Gastrocnemius medialis (tissue), 4 donors: ENCODE measurements at regions of chrX and their contacts with region 1.

Region 1: DNA sequence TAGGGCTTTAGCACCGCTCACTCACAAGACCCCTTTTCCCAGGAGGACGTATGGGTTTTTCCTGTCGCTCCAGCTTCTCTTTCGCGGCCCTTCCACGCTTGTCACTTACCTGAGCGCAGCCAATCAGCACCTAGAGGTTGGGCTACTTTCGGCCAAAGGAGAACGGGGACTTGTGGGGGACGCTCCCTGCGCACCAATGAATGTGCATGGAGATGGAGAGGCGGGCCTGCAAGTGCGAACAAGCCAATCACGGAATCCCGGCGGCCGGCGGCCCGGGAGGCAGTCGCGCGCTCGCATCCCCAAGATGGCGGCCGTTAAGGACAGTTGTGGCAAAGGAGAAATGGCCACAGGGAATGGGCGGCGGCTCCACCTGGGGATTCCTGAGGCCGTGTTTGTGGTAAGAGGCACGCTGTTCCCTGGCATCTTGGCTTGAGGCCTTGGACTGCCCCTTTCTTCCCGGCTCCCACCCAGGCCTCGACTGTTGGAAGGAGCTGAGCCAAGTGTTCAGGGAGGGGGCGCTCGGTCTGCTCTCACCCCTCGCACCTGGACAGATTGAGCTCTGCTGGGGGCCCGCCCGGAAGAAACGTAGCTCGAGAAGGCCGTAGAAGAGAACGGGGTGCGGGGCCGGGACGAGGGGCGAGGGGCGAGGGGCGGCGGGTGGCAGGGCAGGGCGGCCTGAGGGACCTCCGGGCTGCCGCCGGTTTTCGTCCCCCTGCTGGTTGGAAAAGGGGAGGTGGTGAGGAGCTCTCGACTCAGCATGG is at the start of gene VBP1:
- DNase-seq: peak; percentile 89 to 92
- ATAC-seq: peak; percentile 99 to 100
- H3K4me3 ChIP-seq: peak within 1 kb of the TSS; percentile 67 to 87 (median 78)
- H3K27ac ChIP-seq: peak within 1 kb of the TSS; percentile 91 to 97 (median 92)
- H3K4me1 ChIP-seq: peaks cover 7 to 8% of the 10 kb centered on the region in 2 donors
- H3K27me3 ChIP-seq: no peaks in the 10 kb centered on the region
- CTCF ChIP-seq: peak; percentile 12 to 54 (median 34)
- POLR2A ChIP-seq: peak; percentile 24 to 42
- total RNA-seq, gene VBP1: 53.6 to 79.9 (median 72.1) TPM

Region 2: GRCh38 chrX:155070975-155071693 is 145.2 kb before region 1 on chrX and contains the starts of genes BRCC3, CMC4 and MTCP1:
- in situ Hi-C with region 1: no loop called
- intact Hi-C with region 1: loop called (anchors 5 kb)
- DNase-seq: peak; percentile 65 to 76
- ATAC-seq: peak; percentile 83 to 88
- H3K4me3 ChIP-seq: peak within 1 kb of the TSS; percentile 59 to 79 (median 74)
- H3K27ac ChIP-seq: peak within 1 kb of the TSS; percentile 87 to 93 (median 88)
- H3K4me1 ChIP-seq: peaks cover 5 to 16% of the 10 kb centered on the region in 2 donors
- H3K27me3 ChIP-seq: no peaks in the 10 kb centered on the region
- CTCF ChIP-seq: peak in 1 of 5 experiments; percentile 7
- POLR2A ChIP-seq: peak; percentile 69 to 76
- total RNA-seq, gene BRCC3: 8.8 to 15.9 (median 10.6) TPM
- total RNA-seq, gene CMC4: 13.0 to 32.1 (median 26.3) TPM
- total RNA-seq, gene MTCP1: 0.31 to 2.2 (median 0.93) TPM in 3 of 4 donors, not detected in the other

Region 3: DNA sequence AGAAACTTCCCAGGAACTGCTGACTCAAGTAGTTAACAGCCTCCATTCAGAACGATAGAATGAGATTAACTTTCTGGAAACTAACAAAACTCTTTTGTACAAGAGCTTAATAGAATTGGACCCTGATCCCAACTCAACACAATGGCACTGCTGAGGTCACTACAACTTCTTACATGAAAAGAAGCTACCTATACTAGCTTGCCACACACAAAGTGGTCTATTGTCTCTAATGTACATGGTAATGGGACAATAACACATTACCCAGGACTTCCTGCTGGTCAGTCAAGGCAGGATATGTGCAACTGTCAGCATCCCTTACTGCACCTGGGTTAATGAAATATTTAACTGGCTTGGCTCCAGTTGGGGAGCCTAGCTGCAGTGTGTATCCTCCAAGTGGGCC is 88.9 kb before region 1 on chrX:
- in situ Hi-C with region 1: no loop called
- intact Hi-C with region 1: no loop called
- DNase-seq: no peak
- ATAC-seq: no peak
- H3K4me3 ChIP-seq: no peak overlapping the region
- H3K27ac ChIP-seq: no peak overlapping the region
- H3K4me1 ChIP-seq: no peaks in the 10 kb centered on the region
- H3K27me3 ChIP-seq: no peaks in the 10 kb centered on the region
- CTCF ChIP-seq: no peak
- POLR2A ChIP-seq: no peak

Region 4: DNA sequence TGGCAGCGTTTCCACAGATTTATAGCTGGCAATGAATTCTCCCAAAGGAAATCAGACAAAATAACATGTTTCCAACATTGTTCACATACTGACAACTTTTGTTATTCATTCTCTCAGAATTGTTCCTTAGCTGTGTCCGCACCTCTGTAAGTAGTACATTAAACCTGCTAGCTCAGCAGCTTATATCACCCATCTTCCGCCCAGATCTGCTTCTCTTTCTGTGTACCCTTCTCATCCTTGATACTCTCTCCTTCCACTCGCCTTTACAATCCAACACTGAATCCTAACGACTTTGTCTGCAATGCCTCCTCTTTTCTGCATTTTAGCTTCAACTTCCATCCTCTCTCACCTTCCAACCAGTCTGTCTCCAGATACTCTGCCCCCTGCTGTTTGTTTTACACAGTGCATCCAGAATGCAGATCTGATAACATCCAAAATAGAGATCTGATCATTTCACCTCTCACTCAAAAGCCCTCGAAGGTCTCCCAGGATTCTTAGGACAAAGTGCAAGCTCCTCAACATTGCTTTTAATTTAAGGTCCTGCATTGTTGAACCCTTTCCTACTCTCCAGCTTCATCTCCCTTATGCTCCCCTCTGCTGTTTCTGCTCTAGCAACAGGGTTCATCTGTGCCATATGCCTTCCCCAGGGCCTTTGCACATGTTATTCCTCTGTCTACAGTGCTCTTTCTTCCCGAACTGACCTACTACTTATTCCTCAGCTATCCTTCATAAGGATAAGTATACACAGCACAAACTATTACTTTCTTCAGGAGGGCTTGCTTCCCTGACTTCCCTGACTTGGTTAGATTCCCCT is 67.4 kb before region 1 on chrX:
- in situ Hi-C with region 1: no loop called
- intact Hi-C with region 1: no loop called
- DNase-seq: no peak
- ATAC-seq: no peak
- H3K4me3 ChIP-seq: no peak overlapping the region
- H3K27ac ChIP-seq: no peak overlapping the region
- H3K4me1 ChIP-seq: no peaks in the 10 kb centered on the region
- H3K27me3 ChIP-seq: no peaks in the 10 kb centered on the region
- CTCF ChIP-seq: peak in 3 of 5 experiments; percentile 10 to 44 (median 30)
- POLR2A ChIP-seq: no peak

Region 5: GRCh38 chrX:155966865-155967264 is 750.5 kb after region 1 on chrX:
- in situ Hi-C with region 1: no loop called
- intact Hi-C with region 1: no loop called
- DNase-seq: no peak
- ATAC-seq: no peak
- H3K4me3 ChIP-seq: no peak overlapping the region
- H3K27ac ChIP-seq: no peak overlapping the region
- H3K4me1 ChIP-seq: no peaks in the 10 kb centered on the region
- H3K27me3 ChIP-seq: no peaks in the 10 kb centered on the region
- CTCF ChIP-seq: peak in 1 of 5 experiments; percentile 6
- POLR2A ChIP-seq: no peak